B cell (primary cell): ENCODE measurements at regions of chr6 and their contacts with region 1.

Region 1: DNA sequence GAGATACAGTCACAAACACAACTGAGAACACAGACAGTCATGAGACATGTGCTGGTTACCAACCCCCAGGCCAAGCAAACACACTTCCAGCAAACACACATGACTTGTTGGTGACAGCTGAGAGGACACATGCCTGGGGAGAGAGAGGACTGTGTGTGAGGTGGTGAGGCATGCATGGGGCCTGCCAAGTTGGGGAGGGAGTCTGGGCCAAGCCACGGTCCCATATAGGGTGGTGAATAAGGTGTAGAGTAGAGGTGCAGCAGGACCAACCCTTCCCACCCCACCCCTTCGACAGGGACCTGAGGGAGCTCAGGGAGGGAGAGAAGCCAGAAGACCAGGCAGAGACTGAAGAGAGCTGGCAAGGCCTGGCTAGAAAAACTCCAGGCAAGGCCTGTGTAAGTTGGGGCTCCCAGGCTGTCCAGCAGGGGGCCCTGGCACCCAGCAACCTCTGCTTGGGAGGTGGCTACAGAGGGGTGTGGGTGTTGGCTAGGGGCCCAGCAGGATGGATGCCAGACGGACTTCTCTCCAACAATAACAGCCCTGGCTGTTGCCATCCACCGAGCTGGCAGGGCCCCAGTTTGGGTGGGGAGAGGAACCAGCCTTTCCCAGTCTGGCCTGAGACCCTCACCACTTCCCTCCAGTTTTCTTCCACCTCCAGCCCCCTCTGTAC is 2.0 kb upstream of the SLC29A1 start:
- DNase-seq: peak; percentile 81
- ATAC-seq: peak; percentile 40
- H3K4me3 ChIP-seq: no peak overlapping the region
- H3K4me3 Mint-ChIP-seq: peak overlapping the region; percentile 58
- H3K27ac ChIP-seq: no peak overlapping the region
- H3K27ac Mint-ChIP-seq: peak overlapping the region; percentile 13
- H3K4me1 ChIP-seq: peaks cover 26 to 45% of the 10 kb centered on the region in 2 donors
- H3K4me1 Mint-ChIP-seq: peaks cover 41% of the 10 kb centered on the region
- H3K27me3 ChIP-seq: peaks cover 0 to 2% (median 0%) of the 10 kb centered on the region in 4 experiments
- H3K27me3 Mint-ChIP-seq: no peaks in the 10 kb centered on the region
- CTCF ChIP-seq: peak; percentile 80

Region 2: DNA sequence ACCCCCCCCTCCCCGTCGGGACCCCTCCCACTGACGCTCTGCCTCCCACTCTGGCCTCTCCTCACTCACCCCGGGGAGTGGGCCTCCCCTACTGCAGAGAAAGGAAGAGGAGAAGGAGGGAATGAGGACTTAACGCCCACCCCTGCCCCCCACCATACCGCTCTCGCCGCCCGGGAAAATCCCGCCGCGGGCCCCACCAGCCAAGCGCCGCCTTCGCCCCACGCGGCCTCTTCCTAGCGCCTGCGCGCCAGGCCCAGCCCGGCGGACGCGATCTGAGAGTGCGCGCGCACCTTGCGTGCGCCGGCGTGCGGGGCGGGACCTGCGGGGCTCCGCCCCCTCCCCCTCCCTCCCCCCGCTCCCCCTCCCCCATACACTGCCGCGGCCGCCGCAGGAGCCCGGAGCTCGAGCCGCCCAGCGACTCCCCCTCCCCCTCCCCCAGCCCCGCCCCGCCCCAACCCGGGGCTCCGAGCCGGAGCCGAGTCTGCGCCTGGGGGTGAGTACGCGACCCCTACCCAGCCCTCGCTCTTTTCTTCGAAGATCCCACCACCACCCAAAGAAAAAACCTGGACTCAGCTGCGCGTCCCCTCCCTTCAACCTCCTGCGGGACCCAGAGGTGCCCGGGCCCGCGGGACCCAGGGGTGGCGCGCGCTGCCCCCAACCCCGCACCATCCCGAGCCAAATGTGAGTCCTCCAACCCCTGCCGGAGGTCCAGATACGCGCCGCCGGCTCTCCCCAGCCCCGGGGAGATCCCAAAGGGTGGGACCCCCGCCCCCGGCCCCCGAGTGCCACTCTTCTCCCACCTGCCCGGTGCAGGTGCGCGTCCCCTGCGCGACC is 94.0 kb before region 1 on chr6 and contains the starts of genes MRPL14 and TMEM63B:
- CTCF ChIA-PET with region 1: interaction called, 3 read pairs
- POLR2A ChIA-PET with region 1: no interaction called
- intact Hi-C with region 1: loop called (anchors 2 kb)
- DNase-seq: peak; percentile 94
- ATAC-seq: peak; percentile 91
- H3K4me3 ChIP-seq: peak within 1 kb of the TSS; percentile 62 to 98 (median 91)
- H3K4me3 Mint-ChIP-seq: peak within 1 kb of the TSS; percentile 95
- H3K27ac ChIP-seq: peak within 1 kb of the TSS; percentile 83 to 94
- H3K27ac Mint-ChIP-seq: peak within 1 kb of the TSS; percentile 93
- H3K4me1 ChIP-seq: peaks cover 35 to 47% of the 10 kb centered on the region in 2 donors
- H3K4me1 Mint-ChIP-seq: peaks cover 50% of the 10 kb centered on the region
- H3K27me3 ChIP-seq: no peaks in the 10 kb centered on the region
- H3K27me3 Mint-ChIP-seq: no peaks in the 10 kb centered on the region
- CTCF ChIP-seq: no peak
- total RNA-seq, gene MRPL14: 16.7 and 16.8 TPM in 2 replicates
- total RNA-seq, gene TMEM63B: 18.3 and 19.1 TPM in 2 replicates

Region 3: GRCh38 chr6:44237813-44238433 is 16.5 kb after region 1 on chr6:
- CTCF ChIA-PET with region 1: interaction called, 22 read pairs
- POLR2A ChIA-PET with region 1: interaction called, 52 read pairs
- intact Hi-C with region 1: loop called (anchors 1 kb)
- DNase-seq: peak; percentile 87
- ATAC-seq: peak; percentile 93
- H3K4me3 ChIP-seq: peak overlapping the region; percentile 28 to 85 (median 79)
- H3K4me3 Mint-ChIP-seq: peak overlapping the region; percentile 95
- H3K27ac ChIP-seq: peak overlapping the region; percentile 90 to 91
- H3K27ac Mint-ChIP-seq: peak overlapping the region; percentile 96
- H3K4me1 ChIP-seq: peaks cover 6 to 14% of the 10 kb centered on the region in 2 donors
- H3K4me1 Mint-ChIP-seq: peaks cover 15% of the 10 kb centered on the region
- H3K27me3 ChIP-seq: no peaks in the 10 kb centered on the region
- H3K27me3 Mint-ChIP-seq: no peaks in the 10 kb centered on the region
- CTCF ChIP-seq: peak; percentile 97

Region 4: DNA sequence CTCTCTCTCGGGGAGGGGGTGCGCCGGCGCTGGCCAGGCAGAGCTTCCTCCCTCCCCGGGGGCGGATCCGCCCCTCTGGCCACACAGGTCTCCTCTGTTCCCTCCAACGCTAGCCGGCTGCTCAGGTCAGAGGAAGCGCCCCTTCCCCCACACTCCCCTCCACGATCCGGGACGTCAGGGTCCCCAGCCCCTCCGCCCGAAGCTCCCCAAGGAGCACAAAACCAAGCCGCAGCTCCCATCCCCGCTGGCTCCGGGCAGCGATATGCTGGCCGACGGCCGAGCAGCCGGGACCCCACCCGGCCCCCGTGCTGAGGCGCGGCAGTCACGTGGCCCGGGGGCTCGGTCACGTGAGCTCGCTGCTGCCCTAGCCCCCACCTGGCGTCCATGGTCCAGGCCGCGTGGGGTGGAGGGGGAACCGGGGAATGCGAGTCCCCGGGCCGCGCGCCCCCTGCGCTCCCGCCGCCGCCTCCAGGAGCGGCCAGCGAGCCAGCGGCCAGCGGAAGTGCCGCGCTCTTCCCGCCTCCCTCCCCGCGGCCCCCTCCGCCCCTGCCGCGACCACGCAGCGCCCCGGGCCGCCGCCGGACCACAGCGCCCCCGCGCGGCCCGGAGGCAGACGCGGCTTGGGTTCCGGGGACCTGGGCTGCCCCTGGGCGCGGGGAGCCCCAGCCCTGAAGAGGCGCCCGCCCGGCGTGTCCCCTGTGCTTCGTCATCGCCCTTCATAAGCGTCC is 35.8 kb after region 1 on chr6 and contains the start of gene SLC35B2:
- CTCF ChIA-PET with region 1: interaction called, 6 read pairs
- POLR2A ChIA-PET with region 1: interaction called, 11 read pairs
- intact Hi-C with region 1: no loop called
- DNase-seq: peak; percentile 87
- ATAC-seq: peak; percentile 64
- H3K4me3 ChIP-seq: peak within 1 kb of the TSS; percentile 35 to 93 (median 90)
- H3K4me3 Mint-ChIP-seq: peak within 1 kb of the TSS; percentile 88
- H3K27ac ChIP-seq: peak within 1 kb of the TSS; percentile 83 to 98
- H3K27ac Mint-ChIP-seq: peak within 1 kb of the TSS; percentile 100
- H3K4me1 ChIP-seq: peaks cover 57 to 81% of the 10 kb centered on the region in 2 donors
- H3K4me1 Mint-ChIP-seq: peaks cover 89% of the 10 kb centered on the region
- H3K27me3 ChIP-seq: no peaks in the 10 kb centered on the region
- H3K27me3 Mint-ChIP-seq: no peaks in the 10 kb centered on the region
- CTCF ChIP-seq: peak; percentile 75
- total RNA-seq, gene SLC35B2: 29.2 and 30.0 TPM in 2 replicates

Region 5: DNA sequence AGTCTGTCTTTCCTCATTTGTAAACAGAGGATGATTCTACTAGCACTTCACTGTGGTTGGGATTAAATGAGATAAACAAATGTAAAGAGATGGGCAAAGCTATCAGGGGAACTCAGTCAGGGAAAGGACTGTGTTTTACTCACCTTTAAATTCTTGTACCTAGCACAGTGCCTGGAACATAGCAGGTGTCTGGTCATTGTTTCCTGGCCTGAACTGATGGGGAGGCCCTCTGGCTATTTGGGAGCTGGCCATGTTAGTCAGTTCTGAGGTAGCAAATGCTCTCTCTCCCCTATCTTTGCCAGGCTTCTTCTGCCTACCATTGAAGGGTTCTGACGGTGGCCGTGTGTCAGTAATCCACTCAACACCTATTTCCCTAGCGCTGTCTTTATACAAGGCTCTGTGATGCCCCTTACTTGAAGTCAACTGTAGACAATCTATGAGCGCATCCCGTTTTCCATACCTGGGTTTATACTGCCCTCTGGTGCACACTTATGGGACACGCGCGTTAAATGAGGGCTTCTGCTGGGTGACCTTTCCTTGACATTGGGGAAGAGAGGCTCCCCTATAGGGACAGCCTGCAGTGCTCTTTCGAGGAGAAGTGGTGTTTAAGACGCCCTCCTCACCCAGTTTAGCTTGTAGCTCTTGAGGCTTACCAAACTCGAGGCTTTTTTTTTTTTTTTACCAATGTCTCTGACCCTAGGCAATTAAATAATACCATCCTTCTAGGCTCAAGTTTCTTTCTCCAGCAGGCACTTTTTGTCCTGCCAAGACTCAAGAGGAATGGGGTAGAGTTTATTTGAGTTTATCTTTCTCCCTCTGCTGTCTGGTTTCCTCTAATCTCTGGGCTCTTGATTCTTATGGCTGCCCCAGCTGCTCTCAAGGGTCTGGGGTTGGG is 117.0 kb after region 1 on chr6:
- CTCF ChIA-PET with region 1: no interaction called
- POLR2A ChIA-PET with region 1: no interaction called
- intact Hi-C with region 1: loop called (anchors 1 kb)
- DNase-seq: peak; percentile 80
- ATAC-seq: peak; percentile 83
- H3K4me3 ChIP-seq: no peak overlapping the region
- H3K4me3 Mint-ChIP-seq: no peak overlapping the region
- H3K27ac ChIP-seq: no peak overlapping the region
- H3K27ac Mint-ChIP-seq: no peak overlapping the region
- H3K4me1 ChIP-seq: peaks cover 0 to 6% of the 10 kb centered on the region in 2 donors
- H3K4me1 Mint-ChIP-seq: no peaks in the 10 kb centered on the region
- H3K27me3 ChIP-seq: peaks cover 0 to 22% (median 19%) of the 10 kb centered on the region in 4 experiments
- H3K27me3 Mint-ChIP-seq: peaks cover 24% of the 10 kb centered on the region
- CTCF ChIP-seq: peak; percentile 82